Calu3 (cell line): ENCODE measurements at regions of chr16 and their contacts with region 1.

Region 1: GRCh38 chr16:68800257-68800875 is 43.0 kb upstream of the TANGO6 start:
- DNase-seq: peak; percentile 87
- H3K4me3 Mint-ChIP-seq: no peak overlapping the region
- H3K27ac Mint-ChIP-seq: peak overlapping the region; percentile 19
- H3K4me1 Mint-ChIP-seq: peaks cover 35% of the 10 kb centered on the region
- H3K27me3 Mint-ChIP-seq: no peaks in the 10 kb centered on the region
- CTCF ChIP-seq: peak; percentile 83

Region 2: GRCh38 chr16:68528686-68529379 is 271.5 kb before region 1 on chr16:
- CTCF ChIA-PET with region 1: interaction called, 5 read pairs
- intact Hi-C with region 1: loop called (anchors 10 kb)
- DNase-seq: peak; percentile 91
- H3K4me3 Mint-ChIP-seq: peak overlapping the region; percentile 99
- H3K27ac Mint-ChIP-seq: peak overlapping the region; percentile 54
- H3K4me1 Mint-ChIP-seq: peaks cover 28% of the 10 kb centered on the region
- H3K27me3 Mint-ChIP-seq: no peaks in the 10 kb centered on the region
- CTCF ChIP-seq: peak; percentile 95

Region 3: DNA sequence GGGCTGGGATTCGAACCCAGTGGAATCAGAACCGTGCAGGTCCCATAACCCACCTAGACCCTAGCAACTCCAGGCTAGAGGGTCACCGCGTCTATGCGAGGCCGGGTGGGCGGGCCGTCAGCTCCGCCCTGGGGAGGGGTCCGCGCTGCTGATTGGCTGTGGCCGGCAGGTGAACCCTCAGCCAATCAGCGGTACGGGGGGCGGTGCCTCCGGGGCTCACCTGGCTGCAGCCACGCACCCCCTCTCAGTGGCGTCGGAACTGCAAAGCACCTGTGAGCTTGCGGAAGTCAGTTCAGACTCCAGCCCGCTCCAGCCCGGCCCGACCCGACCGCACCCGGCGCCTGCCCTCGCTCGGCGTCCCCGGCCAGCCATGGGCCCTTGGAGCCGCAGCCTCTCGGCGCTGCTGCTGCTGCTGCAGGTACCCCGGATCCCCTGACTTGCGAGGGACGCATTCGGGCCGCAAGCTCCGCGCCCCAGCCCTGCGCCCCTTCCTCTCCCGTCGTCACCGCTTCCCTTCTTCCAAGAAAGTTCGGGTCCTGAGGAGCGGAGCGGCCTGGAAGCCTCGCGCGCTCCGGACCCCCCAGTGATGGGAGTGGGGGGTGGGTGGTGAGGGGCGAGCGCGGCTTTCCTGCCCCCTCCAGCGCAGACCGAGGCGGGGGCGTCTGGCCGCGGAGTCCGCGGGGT is 63.2 kb before region 1 on chr16 and contains the start of gene CDH1:
- CTCF ChIA-PET with region 1: interaction called, 11 read pairs
- intact Hi-C with region 1: loop called (anchors 2 kb)
- DNase-seq: peak; percentile 99
- H3K4me3 Mint-ChIP-seq: peak within 1 kb of the TSS; percentile 89
- H3K27ac Mint-ChIP-seq: peak within 1 kb of the TSS; percentile 85
- H3K4me1 Mint-ChIP-seq: peaks cover 34% of the 10 kb centered on the region
- H3K27me3 Mint-ChIP-seq: no peaks in the 10 kb centered on the region
- CTCF ChIP-seq: no peak
- total RNA-seq, gene CDH1: 328 and 421 TPM in 2 replicates

Region 4: DNA sequence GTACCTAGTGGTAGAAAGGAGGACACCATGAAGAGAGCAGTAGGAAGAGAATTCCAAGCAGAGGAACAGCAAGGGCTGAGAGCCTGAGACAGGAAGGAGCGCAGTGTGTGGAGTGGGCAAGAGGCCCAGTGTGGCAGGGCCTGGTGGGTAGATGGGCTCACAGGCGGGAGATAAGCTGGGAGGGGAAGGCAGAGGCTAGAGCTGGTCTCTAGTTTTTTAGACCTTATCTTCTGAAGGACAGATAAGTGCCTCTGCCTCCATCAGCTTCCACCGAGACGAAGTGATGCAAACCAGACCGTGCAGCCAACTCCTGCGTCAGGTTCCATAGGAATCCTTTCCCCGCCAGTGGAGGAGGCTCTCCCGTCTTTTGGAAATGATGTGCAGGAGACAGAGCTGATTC is 29.7 kb before region 1 on chr16:
- CTCF ChIA-PET with region 1: no interaction called
- intact Hi-C with region 1: no loop called
- DNase-seq: no peak
- H3K4me3 Mint-ChIP-seq: no peak overlapping the region
- H3K27ac Mint-ChIP-seq: no peak overlapping the region
- H3K4me1 Mint-ChIP-seq: peaks cover 7% of the 10 kb centered on the region
- H3K27me3 Mint-ChIP-seq: no peaks in the 10 kb centered on the region
- CTCF ChIP-seq: no peak

Region 5: GRCh38 chr16:68790130-68790761 is 10.1 kb before region 1 on chr16:
- CTCF ChIA-PET with region 1: no interaction called
- intact Hi-C with region 1: no loop called
- DNase-seq: peak; percentile 74
- H3K4me3 Mint-ChIP-seq: peak overlapping the region; percentile 29
- H3K27ac Mint-ChIP-seq: peak overlapping the region; percentile 45
- H3K4me1 Mint-ChIP-seq: peaks cover 54% of the 10 kb centered on the region
- H3K27me3 Mint-ChIP-seq: no peaks in the 10 kb centered on the region
- CTCF ChIP-seq: no peak

Region 6: DNA sequence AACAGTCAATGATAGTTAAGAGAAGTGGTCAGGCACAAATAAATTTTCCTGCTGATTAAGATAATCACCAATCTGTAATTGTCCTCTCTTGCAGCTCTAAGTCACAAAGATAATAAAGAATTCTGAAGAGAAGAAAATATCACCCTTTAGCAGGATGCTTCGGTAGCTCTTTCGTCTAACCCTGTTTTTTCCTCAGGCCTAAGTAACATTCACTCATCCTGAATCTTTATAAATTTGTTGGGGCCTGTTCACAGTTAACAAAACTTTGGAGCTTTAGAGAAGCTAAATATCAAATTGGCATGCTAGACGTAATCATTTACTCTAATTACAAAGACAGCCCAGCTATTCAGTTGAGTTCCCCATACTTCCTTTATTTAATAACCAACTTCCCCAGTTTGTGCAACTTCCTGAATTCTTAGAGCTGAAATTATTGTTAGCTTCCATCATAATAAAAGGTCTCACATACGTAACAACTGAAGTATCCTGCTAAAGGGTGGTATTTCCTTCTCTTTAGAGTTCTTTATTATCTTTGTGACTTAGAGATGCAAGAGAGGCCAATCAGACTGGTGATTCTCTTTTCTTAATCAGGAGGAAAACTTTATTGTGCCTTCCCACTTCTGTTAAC is 161.5 kb after region 1 on chr16:
- CTCF ChIA-PET with region 1: no interaction called
- intact Hi-C with region 1: no loop called
- DNase-seq: no peak
- H3K4me3 Mint-ChIP-seq: no peak overlapping the region
- H3K27ac Mint-ChIP-seq: no peak overlapping the region
- H3K4me1 Mint-ChIP-seq: no peaks in the 10 kb centered on the region
- H3K27me3 Mint-ChIP-seq: no peaks in the 10 kb centered on the region
- CTCF ChIP-seq: no peak

Region 7: DNA sequence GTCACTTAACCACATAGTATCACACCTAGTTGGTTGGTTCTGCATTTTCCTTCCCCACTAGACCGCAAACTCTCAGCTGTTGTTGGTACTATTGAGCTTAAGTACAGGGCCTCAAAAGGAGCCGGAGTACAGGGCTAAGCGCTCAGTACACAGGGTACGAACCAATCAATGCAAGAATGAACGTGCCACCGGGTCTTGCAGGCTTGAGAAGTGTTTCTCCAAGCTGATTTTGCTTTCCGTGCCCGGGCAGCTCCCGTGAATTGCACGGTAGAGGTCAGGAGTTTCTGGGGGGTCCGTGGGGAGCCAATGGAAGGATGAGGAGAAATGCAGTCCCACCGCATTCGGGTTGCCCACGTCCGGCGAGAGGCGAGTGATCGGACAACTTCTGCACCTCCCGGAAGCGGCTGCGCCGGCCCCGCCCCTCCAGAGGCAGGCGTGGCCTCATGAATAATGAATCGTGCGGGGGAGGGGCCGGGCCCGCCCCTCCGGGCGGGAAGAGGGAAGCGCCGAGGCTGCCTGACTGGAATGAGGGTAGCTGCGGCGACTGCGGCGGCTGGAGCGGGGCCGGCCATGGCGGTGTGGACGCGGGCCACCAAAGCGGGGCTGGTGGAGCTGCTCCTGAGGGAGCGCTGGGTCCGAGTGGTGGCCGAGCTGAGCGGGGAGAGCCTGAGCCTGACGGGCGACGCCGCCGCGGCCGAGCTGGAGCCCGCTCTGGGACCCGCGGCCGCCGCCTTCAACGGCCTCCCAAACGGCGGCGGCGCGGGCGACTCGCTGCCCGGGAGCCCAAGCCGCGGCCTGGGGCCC is 386.5 kb after region 1 on chr16 and contains the start of gene SNTB2:
- CTCF ChIA-PET with region 1: no interaction called
- intact Hi-C with region 1: no loop called
- DNase-seq: peak; percentile 98
- H3K4me3 Mint-ChIP-seq: peak within 1 kb of the TSS; percentile 88
- H3K27ac Mint-ChIP-seq: peak within 1 kb of the TSS; percentile 91
- H3K4me1 Mint-ChIP-seq: peaks cover 27% of the 10 kb centered on the region
- H3K27me3 Mint-ChIP-seq: no peaks in the 10 kb centered on the region
- CTCF ChIP-seq: no peak
- total RNA-seq, gene SNTB2: 27.5 and 29.3 TPM in 2 replicates